Activated B cell treated with CpG ODN at 0.5 μM for 24 hours (primary cell): ENCODE measurements at regions of chr19 and their contacts with region 1.

Region 1: GRCh38 chr19:13104360-13104847 is 1.7 kb upstream of the LYL1 start:
- DNase-seq: peak; percentile 86
- ATAC-seq: peak; percentile 56
- H3K4me3 Mint-ChIP-seq: peak overlapping the region; percentile 88
- H3K27ac Mint-ChIP-seq: peak overlapping the region; percentile 98
- H3K4me1 Mint-ChIP-seq: peaks cover 69% of the 10 kb centered on the region
- H3K27me3 Mint-ChIP-seq: no peaks in the 10 kb centered on the region
- CTCF ChIP-seq: peak; percentile 86

Region 2: DNA sequence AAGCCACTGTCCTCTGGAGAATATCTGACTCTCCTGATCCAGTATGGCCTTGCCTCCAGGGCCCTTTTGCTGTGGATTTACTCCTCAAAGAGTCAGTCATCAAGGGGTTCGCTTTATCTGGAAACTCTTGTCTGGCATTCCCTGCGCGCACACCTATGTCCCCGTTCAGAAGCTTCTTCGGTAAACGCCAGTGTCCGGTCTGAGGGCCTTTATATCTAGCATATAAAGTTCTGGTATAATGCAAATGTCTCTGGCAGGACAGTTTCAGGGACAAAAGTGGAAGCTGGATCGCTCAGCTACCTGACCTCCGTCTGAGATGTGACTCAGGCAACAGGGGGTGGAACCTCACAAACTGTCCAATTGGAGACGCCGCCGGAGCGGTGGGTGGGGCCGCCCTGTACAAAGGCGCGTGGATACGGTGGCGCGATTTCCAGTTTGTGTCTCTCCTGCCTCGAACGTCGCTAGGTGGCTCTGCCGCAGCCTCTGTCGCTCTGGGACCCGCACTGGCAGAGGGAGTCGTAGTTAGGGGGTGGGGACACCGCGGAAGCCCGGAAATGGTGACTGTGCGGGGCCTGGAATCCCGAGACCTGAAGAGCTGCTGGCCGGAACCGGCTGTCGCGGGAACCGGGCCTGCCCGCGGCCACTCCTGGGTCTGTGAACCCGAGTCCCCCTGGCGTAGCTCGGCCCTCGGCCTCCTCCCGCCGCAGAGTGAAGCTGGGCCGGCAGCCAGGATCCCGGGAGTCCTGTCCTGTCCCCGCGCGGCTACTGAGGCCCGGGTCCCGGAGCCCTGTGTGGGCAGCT is 609.2 kb before region 1 on chr19:
- CTCF ChIA-PET with region 1: no interaction called
- POLR2A ChIA-PET with region 1: no interaction called
- intact Hi-C with region 1: no loop called
- DNase-seq: peak; percentile 82
- ATAC-seq: peak; percentile 99
- H3K4me3 Mint-ChIP-seq: peak overlapping the region; percentile 90
- H3K27ac Mint-ChIP-seq: peak overlapping the region; percentile 82
- H3K4me1 Mint-ChIP-seq: peaks cover 13% of the 10 kb centered on the region
- H3K27me3 Mint-ChIP-seq: no peaks in the 10 kb centered on the region
- CTCF ChIP-seq: no peak

Region 3: GRCh38 chr19:12838182-12838885 is 266.1 kb before region 1 on chr19 and contains the start of gene MAST1:
- CTCF ChIA-PET with region 1: no interaction called
- POLR2A ChIA-PET with region 1: no interaction called
- intact Hi-C with region 1: loop called (anchors 5 kb)
- DNase-seq: no peak
- ATAC-seq: peak; percentile 67
- H3K4me3 Mint-ChIP-seq: peak within 1 kb of the TSS; percentile 61
- H3K27ac Mint-ChIP-seq: peak within 1 kb of the TSS; percentile 18
- H3K4me1 Mint-ChIP-seq: peaks cover 44% of the 10 kb centered on the region
- H3K27me3 Mint-ChIP-seq: peaks cover 64% of the 10 kb centered on the region
- CTCF ChIP-seq: no peak
- total RNA-seq, gene MAST1: 0.20 and 0.66 TPM in 2 replicates

Region 4: GRCh38 chr19:13093407-13094105 is 10.8 kb before region 1 on chr19:
- CTCF ChIA-PET with region 1: interaction called, 47 read pairs
- POLR2A ChIA-PET with region 1: interaction called, 125 read pairs
- intact Hi-C with region 1: loop called (anchors 1 kb)
- DNase-seq: peak; percentile 73
- ATAC-seq: peak; percentile 56
- H3K4me3 Mint-ChIP-seq: peak overlapping the region; percentile 29
- H3K27ac Mint-ChIP-seq: peak overlapping the region; percentile 95
- H3K4me1 Mint-ChIP-seq: peaks cover 36% of the 10 kb centered on the region
- H3K27me3 Mint-ChIP-seq: no peaks in the 10 kb centered on the region
- CTCF ChIP-seq: peak; percentile 71

Region 5: GRCh38 chr19:13162518-13163314 is 58.3 kb after region 1 on chr19:
- CTCF ChIA-PET with region 1: interaction called, 3 read pairs
- POLR2A ChIA-PET with region 1: interaction called, 101 read pairs
- intact Hi-C with region 1: no loop called
- DNase-seq: peak; percentile 70
- ATAC-seq: peak; percentile 36
- H3K4me3 Mint-ChIP-seq: peak overlapping the region; percentile 84
- H3K27ac Mint-ChIP-seq: peak overlapping the region; percentile 89
- H3K4me1 Mint-ChIP-seq: peaks cover 87% of the 10 kb centered on the region
- H3K27me3 Mint-ChIP-seq: no peaks in the 10 kb centered on the region
- CTCF ChIP-seq: no peak

Region 6: DNA sequence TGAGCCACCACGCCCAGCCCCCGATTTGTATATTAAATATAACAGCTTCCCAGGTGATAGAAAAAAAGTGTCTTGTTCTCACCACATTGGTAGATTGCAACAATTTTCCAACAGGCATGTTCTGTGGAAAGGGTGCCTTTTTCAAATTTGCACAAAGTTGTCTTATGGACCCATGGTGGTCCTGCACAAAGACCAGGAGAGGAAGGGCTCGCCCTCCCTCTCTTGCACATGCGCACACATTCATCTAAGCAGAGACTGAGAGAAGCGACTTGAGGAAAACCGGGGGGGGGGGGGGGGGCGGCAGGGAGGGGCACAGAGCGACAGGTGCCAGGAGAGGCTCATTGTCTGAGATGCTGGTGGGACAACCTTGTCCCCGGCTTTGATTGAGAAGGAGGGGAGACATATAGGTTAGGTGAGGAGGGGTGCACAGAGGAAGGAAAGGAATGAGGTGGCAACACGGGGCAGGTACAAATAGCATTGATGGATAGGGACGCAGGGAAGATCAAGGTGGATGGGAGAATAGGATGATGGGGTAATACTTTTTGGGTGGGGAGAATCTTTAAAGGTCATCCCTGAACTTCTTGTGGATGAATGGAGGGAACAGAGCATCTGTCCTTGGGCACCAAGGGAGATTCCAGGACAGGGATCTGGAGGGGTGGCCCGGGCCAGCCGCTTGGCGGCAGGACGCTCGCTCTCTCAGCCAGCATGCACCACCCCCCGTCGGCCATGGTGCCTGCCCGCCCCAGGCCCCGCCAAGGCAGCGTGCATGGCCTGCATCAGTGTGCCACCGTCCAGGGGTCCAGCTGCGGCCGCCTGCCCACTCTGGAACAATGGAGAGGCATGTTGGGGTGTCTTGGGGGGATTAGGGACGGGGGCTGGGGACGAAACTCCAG is 121.8 kb after region 1 on chr19:
- CTCF ChIA-PET with region 1: no interaction called
- POLR2A ChIA-PET with region 1: no interaction called
- intact Hi-C with region 1: no loop called
- DNase-seq: no peak
- ATAC-seq: no peak
- H3K4me3 Mint-ChIP-seq: no peak overlapping the region
- H3K27ac Mint-ChIP-seq: no peak overlapping the region
- H3K4me1 Mint-ChIP-seq: no peaks in the 10 kb centered on the region
- H3K27me3 Mint-ChIP-seq: peaks cover 25% of the 10 kb centered on the region
- CTCF ChIP-seq: no peak

Region 7: GRCh38 chr19:13262450-13262849 is 158.0 kb after region 1 on chr19:
- CTCF ChIA-PET with region 1: interaction called, 3 read pairs
- POLR2A ChIA-PET with region 1: interaction called, 17 read pairs
- intact Hi-C with region 1: loop called (anchors 1 kb)
- DNase-seq: no peak
- ATAC-seq: peak; percentile 36
- H3K4me3 Mint-ChIP-seq: no peak overlapping the region
- H3K27ac Mint-ChIP-seq: peak overlapping the region; percentile 35
- H3K4me1 Mint-ChIP-seq: peaks cover 28% of the 10 kb centered on the region
- H3K27me3 Mint-ChIP-seq: peaks cover under 1% of the 10 kb centered on the region
- CTCF ChIP-seq: no peak